MCF 10A (cell line): ENCODE measurements at regions of chr4 and their contacts with region 1.

Region 1: GRCh38 chr4:79576429-79576753 is 168.4 kb upstream of the GK2 start:
- DNase-seq: peak; percentile 51
- H3K4me3 Mint-ChIP-seq: no peak overlapping the region
- H3K27ac Mint-ChIP-seq: no peak overlapping the region
- H3K4me1 Mint-ChIP-seq: peaks cover 5% of the 10 kb centered on the region
- H3K27me3 Mint-ChIP-seq: peaks cover 12% of the 10 kb centered on the region
- CTCF ChIP-seq: peak; percentile 58

Region 2: DNA sequence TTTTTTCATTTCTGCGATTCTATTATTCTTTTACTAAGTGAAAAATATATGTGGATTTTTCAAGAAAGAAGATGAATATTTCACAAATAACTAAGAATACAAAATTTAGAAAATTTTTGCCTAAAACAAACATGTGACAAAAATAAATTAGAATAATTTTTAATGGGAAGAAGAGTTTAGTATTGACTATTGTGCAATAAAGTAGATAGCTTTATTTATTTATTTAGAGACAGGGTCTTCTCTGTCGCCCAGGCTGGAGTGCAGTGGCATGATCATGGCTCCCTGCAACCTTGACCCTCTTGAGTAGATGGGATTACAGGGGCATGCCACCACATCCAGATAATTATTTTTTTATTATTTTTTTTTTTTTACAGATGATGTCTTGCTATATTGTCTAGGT is 541.8 kb before region 1 on chr4:
- CTCF ChIA-PET with region 1: interaction called, 11 read pairs
- POLR2A ChIA-PET with region 1: no interaction called
- intact Hi-C with region 1: no loop called
- DNase-seq: no peak
- H3K4me3 Mint-ChIP-seq: no peak overlapping the region
- H3K27ac Mint-ChIP-seq: no peak overlapping the region
- H3K4me1 Mint-ChIP-seq: no peaks in the 10 kb centered on the region
- H3K27me3 Mint-ChIP-seq: peaks cover 11% of the 10 kb centered on the region
- CTCF ChIP-seq: no peak

Region 3: GRCh38 chr4:79042079-79042674 is 534.2 kb before region 1 on chr4:
- CTCF ChIA-PET with region 1: interaction called, 59 read pairs
- POLR2A ChIA-PET with region 1: interaction called, 4 read pairs
- intact Hi-C with region 1: loop called (anchors 1 kb)
- DNase-seq: peak; percentile 59
- H3K4me3 Mint-ChIP-seq: no peak overlapping the region
- H3K27ac Mint-ChIP-seq: no peak overlapping the region
- H3K4me1 Mint-ChIP-seq: no peaks in the 10 kb centered on the region
- H3K27me3 Mint-ChIP-seq: no peaks in the 10 kb centered on the region
- CTCF ChIP-seq: peak; percentile 56

Region 4: GRCh38 chr4:79241846-79242245 is 334.5 kb before region 1 on chr4:
- CTCF ChIA-PET with region 1: interaction called, 4 read pairs
- POLR2A ChIA-PET with region 1: no interaction called
- intact Hi-C with region 1: loop called (anchors 1 kb)
- DNase-seq: peak; percentile 20
- H3K4me3 Mint-ChIP-seq: no peak overlapping the region
- H3K27ac Mint-ChIP-seq: no peak overlapping the region
- H3K4me1 Mint-ChIP-seq: no peaks in the 10 kb centered on the region
- H3K27me3 Mint-ChIP-seq: no peaks in the 10 kb centered on the region
- CTCF ChIP-seq: peak; percentile 10

Region 5: GRCh38 chr4:79514621-79515329 is 61.6 kb before region 1 on chr4:
- CTCF ChIA-PET with region 1: no interaction called
- POLR2A ChIA-PET with region 1: no interaction called
- intact Hi-C with region 1: no loop called
- DNase-seq: no peak
- H3K4me3 Mint-ChIP-seq: no peak overlapping the region
- H3K27ac Mint-ChIP-seq: no peak overlapping the region
- H3K4me1 Mint-ChIP-seq: no peaks in the 10 kb centered on the region
- H3K27me3 Mint-ChIP-seq: peaks cover 25% of the 10 kb centered on the region
- CTCF ChIP-seq: no peak

Region 6: GRCh38 chr4:79563219-79563618 is 13.2 kb before region 1 on chr4:
- CTCF ChIA-PET with region 1: interaction called, 13 read pairs
- POLR2A ChIA-PET with region 1: no interaction called
- intact Hi-C with region 1: no loop called
- DNase-seq: no peak
- H3K4me3 Mint-ChIP-seq: no peak overlapping the region
- H3K27ac Mint-ChIP-seq: no peak overlapping the region
- H3K4me1 Mint-ChIP-seq: no peaks in the 10 kb centered on the region
- H3K27me3 Mint-ChIP-seq: peaks cover 14% of the 10 kb centered on the region
- CTCF ChIP-seq: no peak